ENCODE measurements at regions of chr7 and their contacts with region 1.

Region 1: GRCh38 chr7:12518920-12519681 is 51.4 kb upstream of the SCIN start:
- DNase-seq: peak in 1 of 2 experiments; percentile 75
- H3K4me3 ChIP-seq: no peak overlapping the region
- H3K27ac ChIP-seq: no peak overlapping the region
- H3K4me1 ChIP-seq: peaks cover 0 to 3% (median 0%) of the 10 kb centered on the region in 4 experiments; a peak in 1 of 7 replicates
- H3K27me3 ChIP-seq: no peaks in the 10 kb centered on the region
- CTCF ChIP-seq: peak; percentile 74 to 95 (median 82)
- EP300 ChIP-seq: no peak
- POLR2A ChIP-seq: no peak
- RAD21 ChIP-seq: peak; percentile 53 to 61

Region 2: GRCh38 chr7:12370249-12370648 is 148.9 kb before region 1 on chr7:
- CTCF ChIA-PET with region 1: no interaction called
- POLR2A ChIA-PET with region 1: no interaction called
- DNase-seq: no peak
- H3K4me3 ChIP-seq: no peak overlapping the region
- H3K27ac ChIP-seq: no peak overlapping the region
- H3K4me1 ChIP-seq: no peaks in the 10 kb centered on the region
- H3K27me3 ChIP-seq: no peaks in the 10 kb centered on the region
- CTCF ChIP-seq: no peak
- EP300 ChIP-seq: no peak
- POLR2A ChIP-seq: no peak
- RAD21 ChIP-seq: no peak

Region 3: DNA sequence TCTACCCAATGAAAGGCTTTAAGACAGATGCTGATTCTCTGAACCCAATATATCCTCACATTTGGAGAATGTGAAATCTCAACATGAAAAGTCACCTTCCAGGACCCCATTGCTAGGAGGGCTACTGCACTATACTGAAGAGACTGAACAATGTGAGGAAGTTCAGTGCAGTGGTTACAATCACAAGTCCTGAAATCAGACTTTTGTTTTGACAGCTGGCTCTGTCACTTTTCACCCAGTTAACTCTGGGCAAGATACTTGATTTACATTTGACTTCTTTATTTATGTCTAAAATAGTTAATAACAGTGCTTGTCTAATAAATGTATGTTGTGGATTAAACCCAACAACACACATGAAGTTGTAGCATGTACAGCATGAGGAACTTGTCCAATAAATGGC is 100.6 kb before region 1 on chr7:
- CTCF ChIA-PET with region 1: no interaction called
- POLR2A ChIA-PET with region 1: no interaction called
- DNase-seq: no peak
- H3K4me3 ChIP-seq: no peak overlapping the region
- H3K27ac ChIP-seq: no peak overlapping the region
- H3K4me1 ChIP-seq: peaks cover 0 to 14% (median 5%) of the 10 kb centered on the region in 4 experiments; a peak in 4 of 7 replicates
- H3K27me3 ChIP-seq: no peaks in the 10 kb centered on the region
- CTCF ChIP-seq: no peak
- EP300 ChIP-seq: no peak
- POLR2A ChIP-seq: no peak
- RAD21 ChIP-seq: no peak

Region 4: GRCh38 chr7:12436896-12437535 is 82.1 kb before region 1 on chr7:
- CTCF ChIA-PET with region 1: interaction called, 25 read pairs
- POLR2A ChIA-PET with region 1: no interaction called
- DNase-seq: no peak
- H3K4me3 ChIP-seq: no peak overlapping the region
- H3K27ac ChIP-seq: no peak overlapping the region
- H3K4me1 ChIP-seq: peaks cover 0 to 3% (median 0%) of the 10 kb centered on the region in 4 experiments; a peak in 2 of 7 replicates
- H3K27me3 ChIP-seq: no peaks in the 10 kb centered on the region
- CTCF ChIP-seq: peak; percentile 55 to 71 (median 60)
- EP300 ChIP-seq: no peak
- POLR2A ChIP-seq: no peak
- RAD21 ChIP-seq: peak; percentile 59 to 70

Region 5: DNA sequence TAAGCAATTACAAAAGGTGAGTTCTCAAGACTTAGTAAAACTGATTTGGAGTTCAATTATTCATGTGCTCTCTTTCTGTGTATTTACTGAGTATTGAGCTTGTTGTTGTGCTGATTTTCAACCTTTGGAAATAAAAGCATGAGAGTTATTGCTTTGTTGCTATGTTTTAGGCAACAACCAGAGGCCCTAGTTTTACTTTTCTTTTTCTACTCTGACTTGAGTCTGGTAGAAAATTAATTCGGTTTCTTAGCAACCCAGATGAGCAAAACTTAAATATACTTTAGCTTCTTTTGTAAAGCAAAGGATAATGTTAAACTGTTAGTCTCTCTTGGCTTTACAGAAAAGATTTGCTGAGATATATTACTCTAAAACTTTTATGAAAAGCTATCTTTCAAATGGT is 15.0 kb before region 1 on chr7:
- CTCF ChIA-PET with region 1: interaction called, 25 read pairs
- POLR2A ChIA-PET with region 1: no interaction called
- DNase-seq: no peak
- H3K4me3 ChIP-seq: peak overlapping the region in 1 of 4 experiments; percentile 14; a peak in 1 of 8 replicates
- H3K27ac ChIP-seq: no peak overlapping the region
- H3K4me1 ChIP-seq: peaks cover 0 to 6% (median 0%) of the 10 kb centered on the region in 4 experiments; a peak in 1 of 7 replicates
- H3K27me3 ChIP-seq: no peaks in the 10 kb centered on the region
- CTCF ChIP-seq: no peak
- EP300 ChIP-seq: no peak
- POLR2A ChIP-seq: no peak
- RAD21 ChIP-seq: no peak

Region 6: DNA sequence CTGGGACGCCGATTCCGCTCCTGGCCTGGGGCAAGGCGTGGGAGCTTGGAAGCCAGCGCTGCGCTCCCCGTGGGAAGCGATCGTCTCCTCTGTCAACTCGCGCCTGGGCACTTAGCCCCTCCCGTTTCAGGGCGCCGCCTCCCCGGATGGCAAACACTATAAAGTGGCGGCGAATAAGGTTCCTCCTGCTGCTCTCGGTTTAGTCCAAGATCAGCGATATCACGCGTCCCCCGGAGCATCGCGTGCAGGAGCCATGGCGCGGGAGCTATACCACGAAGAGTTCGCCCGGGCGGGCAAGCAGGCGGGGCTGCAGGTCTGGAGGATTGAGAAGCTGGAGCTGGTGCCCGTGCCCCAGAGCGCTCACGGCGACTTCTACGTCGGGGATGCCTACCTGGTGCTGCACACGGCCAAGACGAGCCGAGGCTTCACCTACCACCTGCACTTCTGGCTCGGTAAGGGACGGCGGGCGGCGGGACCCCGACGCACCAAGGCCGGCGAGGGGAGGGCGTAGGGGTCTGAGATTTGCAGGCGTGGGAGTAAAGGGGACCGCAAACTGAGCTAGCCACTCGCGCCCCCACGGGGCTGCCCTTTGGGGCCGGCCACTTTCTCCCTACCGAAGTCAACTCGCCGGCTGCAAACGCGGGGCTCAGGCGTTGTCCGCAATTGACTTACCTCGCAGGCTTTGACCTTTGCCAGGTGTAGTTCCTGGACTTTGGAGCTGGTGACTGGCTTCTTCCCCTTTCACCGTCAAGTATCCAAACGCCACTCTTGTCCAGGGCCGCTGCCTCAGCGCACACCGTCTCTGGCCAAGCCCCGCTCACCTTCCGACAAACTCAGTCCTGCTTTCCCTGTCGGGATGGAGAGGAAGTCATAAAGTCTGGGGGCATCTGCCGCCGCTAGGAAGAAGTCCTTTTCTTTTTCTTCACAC is 51.7 kb after region 1 on chr7 and contains the start of gene SCIN:
- CTCF ChIA-PET with region 1: interaction called, 14 read pairs
- POLR2A ChIA-PET with region 1: no interaction called
- DNase-seq: peak in 1 of 2 experiments; percentile 75
- H3K4me3 ChIP-seq: peak within 1 kb of the TSS; percentile 39 to 62 (median 56)
- H3K27ac ChIP-seq: no peak within 1 kb of the TSS
- H3K4me1 ChIP-seq: peaks cover 0 to 2% (median 1%) of the 10 kb centered on the region in 4 experiments; a peak in 2 of 7 replicates
- H3K27me3 ChIP-seq: peaks cover 4 to 29% (median 23%) of the 10 kb centered on the region in 4 experiments
- CTCF ChIP-seq: no peak
- EP300 ChIP-seq: no peak
- POLR2A ChIP-seq: 0 out of 3 replicates have a peak, but pooled peaks of 1 of the 2 experiments have one; percentile 18
- RAD21 ChIP-seq: no peak
- total RNA-seq, gene SCIN: 1.9 and 2.3 TPM in 2 replicates

Region 7: GRCh38 chr7:12623897-12624498 is 104.9 kb after region 1 on chr7:
- CTCF ChIA-PET with region 1: interaction called, 84 read pairs
- POLR2A ChIA-PET with region 1: no interaction called
- DNase-seq: no peak
- H3K4me3 ChIP-seq: no peak overlapping the region
- H3K27ac ChIP-seq: no peak overlapping the region
- H3K4me1 ChIP-seq: no peaks in the 10 kb centered on the region
- H3K27me3 ChIP-seq: no peaks in the 10 kb centered on the region
- CTCF ChIP-seq: peak in 2 of 3 experiments; percentile 41 to 48; a peak in 2 of 4 replicates
- EP300 ChIP-seq: no peak
- POLR2A ChIP-seq: no peak
- RAD21 ChIP-seq: peak; percentile 68 to 78

Region 8: DNA sequence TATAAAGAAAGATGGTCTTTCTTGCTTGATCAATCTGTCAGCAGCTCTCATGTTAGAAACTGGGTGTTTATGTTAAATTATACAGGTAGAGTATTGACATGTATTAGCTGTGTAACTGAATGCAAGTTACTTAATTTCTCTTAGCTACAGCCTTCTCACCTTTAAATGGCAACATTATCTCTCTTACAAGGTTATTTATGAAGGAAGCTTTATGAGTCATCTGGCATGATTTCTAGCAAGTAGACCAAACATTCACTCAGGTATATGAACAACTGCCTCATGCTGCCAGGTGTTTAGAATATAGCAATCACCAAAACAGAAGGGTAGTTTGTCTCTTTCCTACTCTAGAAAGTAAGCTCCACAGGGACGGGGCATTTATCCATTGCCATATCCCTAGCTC is 176.9 kb after region 1 on chr7:
- CTCF ChIA-PET with region 1: no interaction called
- POLR2A ChIA-PET with region 1: no interaction called
- DNase-seq: no peak
- H3K4me3 ChIP-seq: no peak overlapping the region
- H3K27ac ChIP-seq: peak overlapping the region; percentile 19; the same call in 1 of the 2 replicates
- H3K4me1 ChIP-seq: no peaks in the 10 kb centered on the region; a peak in 1 of 7 replicates
- H3K27me3 ChIP-seq: no peaks in the 10 kb centered on the region
- CTCF ChIP-seq: no peak
- EP300 ChIP-seq: no peak
- POLR2A ChIP-seq: no peak
- RAD21 ChIP-seq: no peak